Activated CD4-positive, alpha-beta T cell treated with anti-CD3 and anti-CD28 coated beads for 36 hours (primary cell): ENCODE measurements at regions of chr10 and their contacts with region 1.

Region 1: GRCh38 chr10:104121520-104122224 is at the start of gene SFR1:
- DNase-seq: peak; percentile 99
- ATAC-seq: peak; percentile 93
- H3K4me3 Mint-ChIP-seq: peak within 1 kb of the TSS; percentile 91
- H3K27ac Mint-ChIP-seq: peak within 1 kb of the TSS; percentile 97
- H3K4me1 Mint-ChIP-seq: peaks cover 47% of the 10 kb centered on the region
- H3K27me3 Mint-ChIP-seq: no peaks in the 10 kb centered on the region
- total RNA-seq, gene SFR1: 17.2 to 20.5 TPM

Region 2: DNA sequence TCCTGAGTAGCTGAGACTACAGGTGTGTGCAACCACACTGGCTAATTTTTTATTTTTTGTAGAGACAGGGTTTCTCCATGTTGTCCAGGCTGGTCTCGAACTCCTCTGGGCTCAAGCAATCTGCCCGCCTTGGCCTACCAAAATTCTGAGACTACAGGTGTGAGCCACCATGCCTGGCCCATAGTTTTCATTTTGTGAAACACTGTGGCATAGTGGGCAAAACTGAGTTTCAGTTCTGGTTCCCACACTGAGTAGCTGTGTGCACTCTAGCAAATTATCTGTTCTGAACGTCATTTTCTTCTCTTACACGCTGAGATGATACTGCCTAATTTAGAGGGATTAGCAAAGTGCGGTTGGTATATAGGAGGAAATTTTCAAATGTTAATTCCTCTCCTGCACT is 738.9 kb before region 1 on chr10:
- CTCF ChIA-PET with region 1: no interaction called
- POLR2A ChIA-PET with region 1: no interaction called
- intact Hi-C with region 1: no loop called
- DNase-seq: no peak
- ATAC-seq: no peak
- H3K4me3 Mint-ChIP-seq: no peak overlapping the region
- H3K27ac Mint-ChIP-seq: no peak overlapping the region
- H3K4me1 Mint-ChIP-seq: no peaks in the 10 kb centered on the region
- H3K27me3 Mint-ChIP-seq: no peaks in the 10 kb centered on the region

Region 3: GRCh38 chr10:103584216-103585010 is 537.3 kb before region 1 on chr10:
- CTCF ChIA-PET with region 1: no interaction called
- POLR2A ChIA-PET with region 1: no interaction called
- intact Hi-C with region 1: loop called in 1 of 2 experiments (anchors 1 kb)
- DNase-seq: peak; percentile 83
- ATAC-seq: peak; percentile 69
- H3K4me3 Mint-ChIP-seq: peak overlapping the region; percentile 79
- H3K27ac Mint-ChIP-seq: peak overlapping the region; percentile 95
- H3K4me1 Mint-ChIP-seq: peaks cover 10% of the 10 kb centered on the region
- H3K27me3 Mint-ChIP-seq: no peaks in the 10 kb centered on the region

Region 4: GRCh38 chr10:103911021-103911459 is 210.6 kb before region 1 on chr10:
- CTCF ChIA-PET with region 1: interaction called, 6 read pairs
- POLR2A ChIA-PET with region 1: interaction called, 4 read pairs
- intact Hi-C with region 1: loop called (anchors 2 kb)
- DNase-seq: peak; percentile 49
- ATAC-seq: peak; percentile 42
- H3K4me3 Mint-ChIP-seq: peak overlapping the region; percentile 57
- H3K27ac Mint-ChIP-seq: peak overlapping the region; percentile 98
- H3K4me1 Mint-ChIP-seq: peaks cover 70% of the 10 kb centered on the region
- H3K27me3 Mint-ChIP-seq: no peaks in the 10 kb centered on the region

Region 5: GRCh38 chr10:104028146-104028545 is 93.5 kb before region 1 on chr10:
- CTCF ChIA-PET with region 1: interaction called, 3 read pairs
- POLR2A ChIA-PET with region 1: no interaction called
- intact Hi-C with region 1: loop called in 1 of 2 experiments (anchors 5 kb)
- DNase-seq: peak; percentile 56
- ATAC-seq: peak; percentile 96
- H3K4me3 Mint-ChIP-seq: no peak overlapping the region
- H3K27ac Mint-ChIP-seq: no peak overlapping the region
- H3K4me1 Mint-ChIP-seq: peaks cover 15% of the 10 kb centered on the region
- H3K27me3 Mint-ChIP-seq: no peaks in the 10 kb centered on the region

Region 6: DNA sequence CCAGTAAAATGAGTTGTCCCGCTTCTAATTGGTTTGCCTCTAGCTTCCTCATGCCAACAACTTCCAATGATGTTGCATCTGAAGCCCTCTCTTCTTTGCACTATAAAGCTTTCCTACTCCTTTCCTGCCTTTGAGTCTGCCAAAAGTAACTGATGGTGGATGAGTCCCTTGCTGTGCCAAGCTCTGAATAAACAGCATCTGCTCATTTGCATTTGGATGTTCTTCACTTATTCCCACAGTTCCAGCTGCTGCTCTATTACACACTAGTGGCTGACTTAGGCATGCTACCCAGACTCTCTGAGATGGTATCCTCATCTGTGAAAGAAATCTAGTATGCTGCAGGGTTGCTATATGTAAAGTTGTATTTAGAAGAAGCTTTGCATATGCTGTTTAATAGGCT is 25.2 kb after region 1 on chr10:
- CTCF ChIA-PET with region 1: interaction called, 10 read pairs
- POLR2A ChIA-PET with region 1: no interaction called
- intact Hi-C with region 1: no loop called
- DNase-seq: no peak
- ATAC-seq: no peak
- H3K4me3 Mint-ChIP-seq: no peak overlapping the region
- H3K27ac Mint-ChIP-seq: no peak overlapping the region
- H3K4me1 Mint-ChIP-seq: no peaks in the 10 kb centered on the region
- H3K27me3 Mint-ChIP-seq: peaks cover 11% of the 10 kb centered on the region

Region 7: DNA sequence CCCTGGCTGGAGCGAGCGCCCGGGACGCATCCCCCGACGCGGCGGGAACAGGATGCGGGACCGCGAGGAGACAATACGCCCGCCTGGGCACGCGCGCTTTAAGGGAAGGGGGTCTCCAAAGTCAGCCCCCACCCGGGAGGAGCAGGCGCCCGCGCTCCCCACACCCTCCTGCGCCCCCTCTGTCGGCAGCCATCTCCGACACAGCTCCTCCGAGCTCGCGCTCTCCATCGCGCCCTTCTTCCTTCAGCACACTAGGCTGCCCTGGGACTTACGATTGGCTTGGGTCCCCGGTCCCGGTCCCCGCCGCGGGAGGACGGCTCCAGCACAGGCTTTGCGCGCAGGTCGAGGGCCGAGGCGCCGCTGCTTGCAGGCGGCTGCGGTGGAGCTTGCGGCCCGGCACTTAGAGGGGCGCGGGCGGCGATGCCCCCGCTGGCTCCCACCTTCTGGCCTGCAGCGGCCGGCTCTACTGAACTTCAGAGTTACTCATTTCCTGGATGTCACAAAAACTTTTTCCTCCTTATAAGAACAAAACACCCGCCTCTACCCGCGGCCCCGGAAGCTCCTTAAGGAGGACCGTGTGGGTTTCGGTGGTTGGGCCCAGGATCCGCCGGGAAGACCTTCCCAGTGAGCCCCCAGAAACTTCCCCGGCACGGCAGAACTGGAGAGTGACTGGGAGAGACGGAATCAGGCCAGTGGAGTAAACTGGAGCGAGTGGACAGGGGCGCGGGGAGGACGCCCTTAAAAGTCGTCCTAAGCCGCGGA is 216.5 kb after region 1 on chr10 and contains the start of gene ITPRIP:
- CTCF ChIA-PET with region 1: interaction called, 3 read pairs
- POLR2A ChIA-PET with region 1: no interaction called
- intact Hi-C with region 1: loop called (anchors 5 kb)
- DNase-seq: peak; percentile 82
- ATAC-seq: peak; percentile 78
- H3K4me3 Mint-ChIP-seq: peak within 1 kb of the TSS; percentile 93
- H3K27ac Mint-ChIP-seq: peak within 1 kb of the TSS; percentile 99
- H3K4me1 Mint-ChIP-seq: peaks cover 45% of the 10 kb centered on the region
- H3K27me3 Mint-ChIP-seq: no peaks in the 10 kb centered on the region
- total RNA-seq, gene ITPRIP: 20.3 to 21.6 TPM

Region 8: GRCh38 chr10:104359811-104360210 is 238.1 kb after region 1 on chr10:
- CTCF ChIA-PET with region 1: no interaction called
- POLR2A ChIA-PET with region 1: no interaction called
- intact Hi-C with region 1: no loop called
- DNase-seq: no peak
- ATAC-seq: no peak
- H3K4me3 Mint-ChIP-seq: no peak overlapping the region
- H3K27ac Mint-ChIP-seq: no peak overlapping the region
- H3K4me1 Mint-ChIP-seq: peaks cover 4% of the 10 kb centered on the region
- H3K27me3 Mint-ChIP-seq: peaks cover 8% of the 10 kb centered on the region

Region 9: DNA sequence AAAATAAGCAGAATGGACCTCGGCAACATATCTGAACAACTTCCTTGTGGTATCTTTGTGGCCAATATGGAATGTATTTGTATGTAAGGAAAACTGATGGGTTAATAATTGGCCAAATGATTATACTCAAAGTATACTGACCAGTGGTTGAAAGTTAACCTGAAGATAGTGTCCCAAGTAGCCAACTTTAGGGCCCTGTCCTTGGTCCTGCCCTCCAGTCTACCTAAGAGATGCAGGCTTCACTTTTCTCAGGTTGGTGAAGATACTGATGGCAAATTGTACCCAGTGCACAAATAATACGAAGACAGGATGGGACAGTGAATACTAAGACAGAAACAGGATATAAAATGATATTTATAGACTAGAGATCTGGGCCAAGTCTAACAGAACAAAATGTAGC is 628.6 kb after region 1 on chr10:
- CTCF ChIA-PET with region 1: no interaction called
- POLR2A ChIA-PET with region 1: no interaction called
- intact Hi-C with region 1: no loop called
- DNase-seq: no peak
- ATAC-seq: no peak
- H3K4me3 Mint-ChIP-seq: no peak overlapping the region
- H3K27ac Mint-ChIP-seq: no peak overlapping the region
- H3K4me1 Mint-ChIP-seq: no peaks in the 10 kb centered on the region
- H3K27me3 Mint-ChIP-seq: peaks cover 3% of the 10 kb centered on the region